HCT116 (cell line): ENCODE measurements at regions of chr13 and their contacts with region 1.

Region 1: GRCh38 chr13:68927387-68928026 is 1180.1 kb upstream of the ATXN8OS start:
- DNase-seq: peak; percentile 33
- ATAC-seq: peak; percentile 76
- H3K4me3 ChIP-seq: no peak overlapping the region
- H3K27ac ChIP-seq: no peak overlapping the region
- H3K4me1 ChIP-seq: no peaks in the 10 kb centered on the region
- H3K27me3 ChIP-seq: no peaks in the 10 kb centered on the region
- CTCF ChIP-seq: peak; percentile 16 to 65 (median 52); a peak in 4 of 6 replicates
- POLR2A ChIP-seq: no peak
- RAD21 ChIP-seq: peak; percentile 65

Region 2: DNA sequence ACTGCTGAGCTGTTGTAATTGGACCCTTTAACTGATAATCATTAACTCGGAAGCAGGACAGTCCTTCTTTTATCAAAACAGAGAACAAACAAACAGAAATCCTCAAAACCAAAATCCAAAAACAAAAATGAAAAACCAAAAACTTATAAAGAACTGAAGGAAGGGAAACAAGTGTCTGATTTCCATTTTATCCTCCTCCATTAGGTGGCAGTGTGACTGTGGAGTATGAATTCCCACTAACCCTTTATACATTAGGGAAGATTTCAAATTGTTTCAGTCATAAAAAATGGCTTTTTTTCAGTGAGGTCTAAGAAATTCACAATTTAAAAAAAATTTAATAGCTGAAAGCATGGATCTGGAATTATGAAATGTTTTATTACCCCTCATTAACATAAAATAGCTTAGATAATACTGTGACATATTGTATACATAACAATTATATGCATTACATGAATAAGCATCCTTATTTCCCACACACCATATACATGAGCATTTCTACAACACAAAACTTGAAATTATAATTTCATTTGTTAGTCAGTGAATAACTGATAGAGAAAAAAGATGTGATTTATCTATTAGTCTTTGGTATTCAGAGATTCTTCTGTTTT is 623.1 kb before region 1 on chr13:
- CTCF ChIA-PET with region 1: interaction called, 6 read pairs
- POLR2A ChIA-PET with region 1: no interaction called
- RAD21 ChIA-PET with region 1: no interaction called
- intact Hi-C with region 1: loop called (anchors 5 kb)
- DNase-seq: peak; percentile 1
- ATAC-seq: no peak
- H3K4me3 ChIP-seq: no peak overlapping the region
- H3K27ac ChIP-seq: no peak overlapping the region
- H3K4me1 ChIP-seq: no peaks in the 10 kb centered on the region
- H3K27me3 ChIP-seq: no peaks in the 10 kb centered on the region
- CTCF ChIP-seq: peak; percentile 17 to 61 (median 47); a peak in 5 of 6 replicates
- POLR2A ChIP-seq: no peak
- RAD21 ChIP-seq: peak; percentile 49

Region 3: DNA sequence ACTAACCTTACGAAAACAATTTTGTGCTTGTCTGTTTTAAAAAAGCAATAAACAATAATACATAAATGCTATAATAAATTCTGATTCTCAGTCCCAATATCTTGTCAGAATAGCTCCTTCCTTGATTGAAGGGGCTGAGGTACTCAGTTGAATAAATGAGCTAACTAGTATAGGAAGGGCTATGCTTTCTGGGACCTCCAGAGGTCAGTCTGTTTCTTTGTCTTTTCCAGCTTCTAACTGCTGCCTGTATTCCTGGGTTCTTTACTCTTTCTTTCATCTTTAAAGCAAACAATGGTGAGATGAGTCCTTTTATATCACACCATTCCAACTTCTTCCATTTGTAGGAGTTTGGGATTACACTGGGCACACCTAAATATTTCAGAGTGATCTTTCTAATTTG is 116.8 kb before region 1 on chr13:
- CTCF ChIA-PET with region 1: interaction called, 10 read pairs
- POLR2A ChIA-PET with region 1: no interaction called
- RAD21 ChIA-PET with region 1: no interaction called
- intact Hi-C with region 1: no loop called
- DNase-seq: no peak
- ATAC-seq: peak; percentile 60; the same call in 1 of the 2 replicates
- H3K4me3 ChIP-seq: no peak overlapping the region
- H3K27ac ChIP-seq: no peak overlapping the region
- H3K4me1 ChIP-seq: no peaks in the 10 kb centered on the region
- H3K27me3 ChIP-seq: no peaks in the 10 kb centered on the region
- CTCF ChIP-seq: peak in 1 of 3 experiments; percentile 33; a peak in 1 of 6 replicates
- POLR2A ChIP-seq: no peak
- RAD21 ChIP-seq: peak; percentile 28; the same call in 1 of the 2 replicates

Region 4: GRCh38 chr13:69109891-69110525 is 182.5 kb after region 1 on chr13:
- CTCF ChIA-PET with region 1: no interaction called
- POLR2A ChIA-PET with region 1: no interaction called
- RAD21 ChIA-PET with region 1: no interaction called
- intact Hi-C with region 1: no loop called
- DNase-seq: no peak
- ATAC-seq: no peak
- H3K4me3 ChIP-seq: no peak overlapping the region
- H3K27ac ChIP-seq: no peak overlapping the region
- H3K4me1 ChIP-seq: no peaks in the 10 kb centered on the region
- H3K27me3 ChIP-seq: no peaks in the 10 kb centered on the region
- CTCF ChIP-seq: no peak
- POLR2A ChIP-seq: no peak
- RAD21 ChIP-seq: no peak